Caco-2 (cell line): ENCODE measurements at regions of chr6 and their contacts with region 1.

Region 1: DNA sequence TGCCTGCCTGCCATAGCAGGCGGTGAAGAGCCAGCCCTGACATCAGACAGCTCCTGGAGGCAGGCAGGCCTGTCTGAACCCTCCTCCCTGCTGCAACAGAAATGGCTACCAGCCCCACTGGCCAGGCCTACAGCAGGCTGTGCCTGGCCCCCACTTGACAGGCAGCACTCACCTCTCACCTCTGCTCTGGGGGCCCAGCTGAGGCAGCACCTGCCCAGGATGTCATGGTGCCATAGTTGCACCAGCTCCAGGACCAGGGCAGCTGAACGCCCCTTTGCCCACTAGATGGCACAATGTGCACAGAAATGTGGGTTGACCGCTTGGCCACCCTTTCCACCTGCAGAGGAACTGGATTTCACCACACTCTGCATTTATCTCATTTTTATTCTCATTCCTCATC is 30.6 kb downstream of the MRPL14 start:
- DNase-seq: peak; percentile 73 to 83
- H3K4me3 ChIP-seq: no peak overlapping the region
- H3K4me3 Mint-ChIP-seq: no peak overlapping the region
- H3K27ac Mint-ChIP-seq: peak overlapping the region; percentile 87
- H3K4me1 ChIP-seq: peaks cover 40% of the 10 kb centered on the region
- H3K4me1 Mint-ChIP-seq: peaks cover 47% of the 10 kb centered on the region
- H3K27me3 ChIP-seq: no peaks in the 10 kb centered on the region
- H3K27me3 Mint-ChIP-seq: no peaks in the 10 kb centered on the region
- CTCF ChIP-seq: peak; percentile 70 to 80

Region 2: GRCh38 chr6:43972913-43973300 is 123.7 kb before region 1 on chr6:
- CTCF ChIA-PET with region 1: no interaction called
- POLR2A ChIA-PET with region 1: no interaction called
- intact Hi-C with region 1: no loop called
- DNase-seq: no peak
- H3K4me3 ChIP-seq: no peak overlapping the region
- H3K4me3 Mint-ChIP-seq: no peak overlapping the region
- H3K27ac Mint-ChIP-seq: no peak overlapping the region
- H3K4me1 ChIP-seq: peaks cover 10% of the 10 kb centered on the region
- H3K4me1 Mint-ChIP-seq: peaks cover 6% of the 10 kb centered on the region
- H3K27me3 ChIP-seq: no peaks in the 10 kb centered on the region
- H3K27me3 Mint-ChIP-seq: no peaks in the 10 kb centered on the region
- CTCF ChIP-seq: no peak

Region 3: DNA sequence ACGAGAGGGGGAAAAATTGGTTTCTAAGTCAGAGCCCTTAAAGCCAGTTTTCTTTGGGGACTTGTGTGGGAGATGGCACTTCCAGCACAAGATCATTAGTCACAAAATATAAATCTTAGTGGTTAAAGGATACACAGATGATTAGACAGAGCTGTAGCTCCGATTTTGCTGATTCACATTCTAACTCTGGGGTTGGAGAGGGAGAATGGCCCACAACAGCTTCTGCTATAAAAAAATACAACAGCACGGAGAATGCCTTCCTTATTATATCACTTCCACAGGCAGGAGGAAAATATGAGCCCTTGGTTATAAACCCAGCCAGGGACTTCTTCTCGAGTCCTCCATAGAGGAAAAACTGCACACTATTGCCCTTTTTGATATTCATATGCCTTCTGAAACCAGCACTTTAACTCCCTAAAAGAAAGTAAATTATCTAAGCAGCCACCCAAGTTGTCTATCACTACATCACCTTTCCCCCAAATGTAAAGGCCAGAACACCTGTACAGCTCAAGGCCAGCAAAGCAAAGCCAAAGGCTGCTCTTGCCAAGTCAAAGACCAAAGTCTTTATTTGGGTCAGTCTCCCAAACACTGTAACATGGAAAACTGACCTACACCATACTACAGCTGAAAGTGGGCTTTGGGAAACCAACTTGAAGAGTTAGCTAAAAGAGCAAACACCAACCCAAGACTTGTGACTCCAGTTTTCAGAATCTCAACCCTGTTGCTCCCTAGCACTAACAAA is 20.2 kb after region 1 on chr6:
- CTCF ChIA-PET with region 1: interaction called, 7 read pairs
- POLR2A ChIA-PET with region 1: no interaction called
- intact Hi-C with region 1: loop called (anchors 2 kb)
- DNase-seq: no peak
- H3K4me3 ChIP-seq: no peak overlapping the region
- H3K4me3 Mint-ChIP-seq: no peak overlapping the region
- H3K27ac Mint-ChIP-seq: peak overlapping the region; percentile 19
- H3K4me1 ChIP-seq: peaks cover 24% of the 10 kb centered on the region
- H3K4me1 Mint-ChIP-seq: peaks cover 28% of the 10 kb centered on the region
- H3K27me3 ChIP-seq: no peaks in the 10 kb centered on the region
- H3K27me3 Mint-ChIP-seq: no peaks in the 10 kb centered on the region
- CTCF ChIP-seq: no peak

Region 4: DNA sequence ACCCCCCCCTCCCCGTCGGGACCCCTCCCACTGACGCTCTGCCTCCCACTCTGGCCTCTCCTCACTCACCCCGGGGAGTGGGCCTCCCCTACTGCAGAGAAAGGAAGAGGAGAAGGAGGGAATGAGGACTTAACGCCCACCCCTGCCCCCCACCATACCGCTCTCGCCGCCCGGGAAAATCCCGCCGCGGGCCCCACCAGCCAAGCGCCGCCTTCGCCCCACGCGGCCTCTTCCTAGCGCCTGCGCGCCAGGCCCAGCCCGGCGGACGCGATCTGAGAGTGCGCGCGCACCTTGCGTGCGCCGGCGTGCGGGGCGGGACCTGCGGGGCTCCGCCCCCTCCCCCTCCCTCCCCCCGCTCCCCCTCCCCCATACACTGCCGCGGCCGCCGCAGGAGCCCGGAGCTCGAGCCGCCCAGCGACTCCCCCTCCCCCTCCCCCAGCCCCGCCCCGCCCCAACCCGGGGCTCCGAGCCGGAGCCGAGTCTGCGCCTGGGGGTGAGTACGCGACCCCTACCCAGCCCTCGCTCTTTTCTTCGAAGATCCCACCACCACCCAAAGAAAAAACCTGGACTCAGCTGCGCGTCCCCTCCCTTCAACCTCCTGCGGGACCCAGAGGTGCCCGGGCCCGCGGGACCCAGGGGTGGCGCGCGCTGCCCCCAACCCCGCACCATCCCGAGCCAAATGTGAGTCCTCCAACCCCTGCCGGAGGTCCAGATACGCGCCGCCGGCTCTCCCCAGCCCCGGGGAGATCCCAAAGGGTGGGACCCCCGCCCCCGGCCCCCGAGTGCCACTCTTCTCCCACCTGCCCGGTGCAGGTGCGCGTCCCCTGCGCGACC is 30.8 kb after region 1 on chr6 and contains the starts of genes MRPL14 and TMEM63B:
- CTCF ChIA-PET with region 1: interaction called, 8 read pairs
- POLR2A ChIA-PET with region 1: interaction called, 5 read pairs
- intact Hi-C with region 1: loop called (anchors 1 kb)
- DNase-seq: peak; percentile 82 to 92
- H3K4me3 ChIP-seq: peak within 1 kb of the TSS; percentile 85
- H3K4me3 Mint-ChIP-seq: peak within 1 kb of the TSS; percentile 94
- H3K27ac Mint-ChIP-seq: peak within 1 kb of the TSS; percentile 80
- H3K4me1 ChIP-seq: peaks cover 18% of the 10 kb centered on the region; the same call in 1 of the 2 replicates
- H3K4me1 Mint-ChIP-seq: peaks cover 37% of the 10 kb centered on the region
- H3K27me3 ChIP-seq: no peaks in the 10 kb centered on the region
- H3K27me3 Mint-ChIP-seq: no peaks in the 10 kb centered on the region
- CTCF ChIP-seq: no peak
- total RNA-seq, gene MRPL14: 87.6 and 92.2 TPM in 2 replicates
- total RNA-seq, gene TMEM63B: 28.2 and 28.4 TPM in 2 replicates

Region 5: DNA sequence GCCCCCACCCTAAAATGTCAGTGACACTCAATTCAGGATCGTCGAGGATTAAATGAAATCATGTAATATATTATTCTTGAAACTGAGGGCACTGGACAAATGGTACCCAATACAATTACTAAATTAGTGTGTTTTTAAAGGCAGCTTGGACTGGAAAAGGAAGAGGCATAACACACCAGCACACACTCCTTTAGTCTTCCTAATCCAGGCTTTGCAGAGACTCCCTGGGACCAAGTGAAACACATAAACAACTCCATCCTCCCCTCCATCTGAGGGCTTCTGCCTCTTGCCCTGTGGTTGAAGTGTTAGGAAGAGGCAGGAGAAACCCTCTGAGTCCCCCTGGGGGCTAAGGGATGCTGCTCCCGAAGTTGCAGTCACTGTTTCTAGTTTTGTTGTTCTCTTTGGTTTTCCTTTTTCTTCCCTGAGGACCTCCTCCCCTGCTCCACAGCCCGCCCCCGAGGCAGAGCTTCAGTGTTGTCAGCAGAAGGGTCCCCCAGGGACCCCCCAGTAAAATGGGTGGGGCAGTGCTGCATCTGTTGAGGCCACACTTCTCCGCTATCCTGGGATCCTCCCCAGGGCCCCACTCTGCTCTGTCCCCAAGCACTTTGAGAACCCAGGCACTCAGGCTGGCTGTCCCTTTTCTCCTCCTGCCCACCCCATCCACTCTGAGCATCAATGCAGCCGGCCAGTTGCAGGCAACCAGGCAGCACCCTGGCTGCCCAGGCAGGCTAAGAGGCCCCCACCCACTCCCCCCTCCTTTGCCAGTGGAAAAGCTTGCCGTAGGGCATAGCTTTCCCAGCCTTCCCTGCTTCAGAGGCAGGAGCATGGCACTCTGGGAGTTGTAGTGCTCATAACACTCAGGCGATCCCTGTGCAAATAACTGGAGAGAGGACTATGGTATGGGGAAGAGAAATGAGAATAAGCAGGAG is 36.7 kb after region 1 on chr6:
- CTCF ChIA-PET with region 1: interaction called, 8 read pairs
- POLR2A ChIA-PET with region 1: interaction called, 7 read pairs
- intact Hi-C with region 1: loop called (anchors 1 kb)
- DNase-seq: peak; percentile 76 to 80
- H3K4me3 ChIP-seq: no peak overlapping the region
- H3K4me3 Mint-ChIP-seq: no peak overlapping the region
- H3K27ac Mint-ChIP-seq: peak overlapping the region; percentile 60
- H3K4me1 ChIP-seq: peaks cover 16% of the 10 kb centered on the region
- H3K4me1 Mint-ChIP-seq: peaks cover 29% of the 10 kb centered on the region
- H3K27me3 ChIP-seq: no peaks in the 10 kb centered on the region
- H3K27me3 Mint-ChIP-seq: no peaks in the 10 kb centered on the region
- CTCF ChIP-seq: no peak

Region 6: GRCh38 chr6:44156494-44157151 is 60.0 kb after region 1 on chr6:
- CTCF ChIA-PET with region 1: interaction called, 4 read pairs
- POLR2A ChIA-PET with region 1: no interaction called
- intact Hi-C with region 1: loop called (anchors 2 kb)
- DNase-seq: peak; percentile 68 to 83
- H3K4me3 ChIP-seq: no peak overlapping the region
- H3K4me3 Mint-ChIP-seq: peak overlapping the region; percentile 15
- H3K27ac Mint-ChIP-seq: peak overlapping the region; percentile 50
- H3K4me1 ChIP-seq: peaks cover 17% of the 10 kb centered on the region
- H3K4me1 Mint-ChIP-seq: peaks cover 13% of the 10 kb centered on the region
- H3K27me3 ChIP-seq: no peaks in the 10 kb centered on the region
- H3K27me3 Mint-ChIP-seq: no peaks in the 10 kb centered on the region
- CTCF ChIP-seq: no peak

Region 7: DNA sequence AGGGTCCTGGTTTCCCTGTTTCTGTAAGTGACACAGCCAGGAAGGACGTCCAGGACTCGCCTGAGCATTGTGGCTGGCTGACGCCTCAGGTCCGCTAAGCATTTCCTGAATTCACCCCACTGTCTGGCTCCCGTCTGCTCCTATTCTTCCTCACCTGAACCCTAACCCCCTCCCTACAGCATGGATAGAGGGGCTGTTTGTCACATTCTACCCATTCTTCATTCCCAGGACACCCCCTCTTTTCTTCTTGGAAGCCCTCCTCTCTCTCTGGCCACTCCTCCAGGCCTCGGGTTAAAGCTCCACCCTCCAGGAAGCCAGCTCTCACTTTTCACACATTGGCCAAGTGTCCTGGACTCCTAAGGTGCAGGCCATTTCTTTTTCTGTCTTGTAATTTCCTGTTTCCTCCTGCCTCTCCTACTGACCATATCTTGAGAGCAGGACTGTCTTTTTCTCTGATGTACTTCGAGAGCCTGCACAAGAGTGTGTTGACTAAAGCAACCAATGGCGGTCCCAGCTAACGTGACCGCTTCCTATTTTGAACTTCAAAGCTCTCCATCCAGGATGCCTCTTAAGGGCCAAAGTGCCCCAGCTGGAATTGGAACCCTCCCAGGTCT is 95.9 kb after region 1 on chr6:
- CTCF ChIA-PET with region 1: no interaction called
- POLR2A ChIA-PET with region 1: no interaction called
- intact Hi-C with region 1: no loop called
- DNase-seq: no peak
- H3K4me3 ChIP-seq: no peak overlapping the region
- H3K4me3 Mint-ChIP-seq: no peak overlapping the region
- H3K27ac Mint-ChIP-seq: peak overlapping the region; percentile 1
- H3K4me1 ChIP-seq: no peaks in the 10 kb centered on the region
- H3K4me1 Mint-ChIP-seq: no peaks in the 10 kb centered on the region
- H3K27me3 ChIP-seq: no peaks in the 10 kb centered on the region
- H3K27me3 Mint-ChIP-seq: no peaks in the 10 kb centered on the region
- CTCF ChIP-seq: no peak

Region 8: DNA sequence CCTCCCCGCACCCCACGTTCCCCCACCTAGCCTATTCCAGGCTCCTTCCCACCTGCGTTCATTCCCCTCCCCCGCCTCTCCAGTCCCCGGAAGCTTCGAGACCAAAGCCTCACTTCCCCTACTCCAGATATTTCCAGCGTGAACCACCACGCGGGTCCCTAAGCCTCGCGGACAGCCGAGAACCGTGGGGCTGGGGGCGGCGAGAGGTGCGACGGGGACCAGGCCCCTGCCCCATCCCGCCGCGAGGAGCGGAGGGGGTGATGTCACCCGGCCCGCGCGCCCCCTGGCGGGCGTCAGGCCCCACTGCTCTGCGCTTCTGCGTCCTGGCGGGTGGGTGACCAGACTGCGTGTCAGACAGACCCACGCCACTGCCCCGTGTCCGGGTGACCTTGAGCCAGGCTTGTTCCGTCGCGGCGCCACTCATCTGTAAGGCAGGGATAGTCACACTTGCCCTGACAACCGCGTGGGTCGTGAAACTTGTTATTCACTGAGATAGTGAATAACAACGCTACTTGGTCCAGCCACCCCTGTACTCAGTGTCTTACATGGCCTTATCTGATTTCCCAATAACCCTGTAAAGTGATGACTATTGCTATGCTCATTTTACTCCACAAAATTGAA is 141.3 kb after region 1 on chr6:
- CTCF ChIA-PET with region 1: interaction called, 5 read pairs
- POLR2A ChIA-PET with region 1: no interaction called
- intact Hi-C with region 1: loop called (anchors 1 kb)
- DNase-seq: peak; percentile 69 to 90
- H3K4me3 ChIP-seq: peak overlapping the region; percentile 58
- H3K4me3 Mint-ChIP-seq: peak overlapping the region; percentile 89
- H3K27ac Mint-ChIP-seq: peak overlapping the region; percentile 95
- H3K4me1 ChIP-seq: peaks cover 19% of the 10 kb centered on the region
- H3K4me1 Mint-ChIP-seq: peaks cover 17% of the 10 kb centered on the region
- H3K27me3 ChIP-seq: no peaks in the 10 kb centered on the region
- H3K27me3 Mint-ChIP-seq: no peaks in the 10 kb centered on the region
- CTCF ChIP-seq: peak; percentile 92 to 93

Region 9: DNA sequence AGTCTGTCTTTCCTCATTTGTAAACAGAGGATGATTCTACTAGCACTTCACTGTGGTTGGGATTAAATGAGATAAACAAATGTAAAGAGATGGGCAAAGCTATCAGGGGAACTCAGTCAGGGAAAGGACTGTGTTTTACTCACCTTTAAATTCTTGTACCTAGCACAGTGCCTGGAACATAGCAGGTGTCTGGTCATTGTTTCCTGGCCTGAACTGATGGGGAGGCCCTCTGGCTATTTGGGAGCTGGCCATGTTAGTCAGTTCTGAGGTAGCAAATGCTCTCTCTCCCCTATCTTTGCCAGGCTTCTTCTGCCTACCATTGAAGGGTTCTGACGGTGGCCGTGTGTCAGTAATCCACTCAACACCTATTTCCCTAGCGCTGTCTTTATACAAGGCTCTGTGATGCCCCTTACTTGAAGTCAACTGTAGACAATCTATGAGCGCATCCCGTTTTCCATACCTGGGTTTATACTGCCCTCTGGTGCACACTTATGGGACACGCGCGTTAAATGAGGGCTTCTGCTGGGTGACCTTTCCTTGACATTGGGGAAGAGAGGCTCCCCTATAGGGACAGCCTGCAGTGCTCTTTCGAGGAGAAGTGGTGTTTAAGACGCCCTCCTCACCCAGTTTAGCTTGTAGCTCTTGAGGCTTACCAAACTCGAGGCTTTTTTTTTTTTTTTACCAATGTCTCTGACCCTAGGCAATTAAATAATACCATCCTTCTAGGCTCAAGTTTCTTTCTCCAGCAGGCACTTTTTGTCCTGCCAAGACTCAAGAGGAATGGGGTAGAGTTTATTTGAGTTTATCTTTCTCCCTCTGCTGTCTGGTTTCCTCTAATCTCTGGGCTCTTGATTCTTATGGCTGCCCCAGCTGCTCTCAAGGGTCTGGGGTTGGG is 241.9 kb after region 1 on chr6:
- CTCF ChIA-PET with region 1: no interaction called
- POLR2A ChIA-PET with region 1: no interaction called
- intact Hi-C with region 1: loop called (anchors 1 kb)
- DNase-seq: peak; percentile 51 to 68
- H3K4me3 ChIP-seq: no peak overlapping the region
- H3K4me3 Mint-ChIP-seq: no peak overlapping the region
- H3K27ac Mint-ChIP-seq: no peak overlapping the region
- H3K4me1 ChIP-seq: no peaks in the 10 kb centered on the region
- H3K4me1 Mint-ChIP-seq: no peaks in the 10 kb centered on the region
- H3K27me3 ChIP-seq: no peaks in the 10 kb centered on the region
- H3K27me3 Mint-ChIP-seq: peaks cover 3% of the 10 kb centered on the region
- CTCF ChIP-seq: peak; percentile 65 to 84